A549 (cell line): ENCODE measurements at regions of chr6 and their contacts with region 1.

Region 1: GRCh38 chr6:43629505-43630300 is 639 bp upstream of the GTPBP2 start:
- DNase-seq: peak; percentile 95 to 97
- ATAC-seq: peak; percentile 82 to 92
- H3K4me3 ChIP-seq: peak overlapping the region; percentile 96
- H3K27ac ChIP-seq: peak overlapping the region; percentile 88 to 100
- H3K4me1 ChIP-seq: peaks cover 26% of the 10 kb centered on the region
- CTCF ChIP-seq: no peak
- EP300 ChIP-seq: no peak
- POLR2A ChIP-seq: no peak
- RAD21 ChIP-seq: no peak

Region 2: GRCh38 chr6:43600595-43600994 is 29.1 kb before region 1 on chr6:
- CTCF ChIA-PET with region 1: no interaction called
- POLR2A ChIA-PET with region 1: no interaction called
- DNase-seq: no peak
- ATAC-seq: no peak
- H3K4me3 ChIP-seq: no peak overlapping the region
- H3K27ac ChIP-seq: no peak overlapping the region
- H3K4me1 ChIP-seq: no peaks in the 10 kb centered on the region; the same call in 2 of the 3 replicates
- CTCF ChIP-seq: no peak
- EP300 ChIP-seq: no peak
- POLR2A ChIP-seq: no peak
- RAD21 ChIP-seq: no peak

Region 3: DNA sequence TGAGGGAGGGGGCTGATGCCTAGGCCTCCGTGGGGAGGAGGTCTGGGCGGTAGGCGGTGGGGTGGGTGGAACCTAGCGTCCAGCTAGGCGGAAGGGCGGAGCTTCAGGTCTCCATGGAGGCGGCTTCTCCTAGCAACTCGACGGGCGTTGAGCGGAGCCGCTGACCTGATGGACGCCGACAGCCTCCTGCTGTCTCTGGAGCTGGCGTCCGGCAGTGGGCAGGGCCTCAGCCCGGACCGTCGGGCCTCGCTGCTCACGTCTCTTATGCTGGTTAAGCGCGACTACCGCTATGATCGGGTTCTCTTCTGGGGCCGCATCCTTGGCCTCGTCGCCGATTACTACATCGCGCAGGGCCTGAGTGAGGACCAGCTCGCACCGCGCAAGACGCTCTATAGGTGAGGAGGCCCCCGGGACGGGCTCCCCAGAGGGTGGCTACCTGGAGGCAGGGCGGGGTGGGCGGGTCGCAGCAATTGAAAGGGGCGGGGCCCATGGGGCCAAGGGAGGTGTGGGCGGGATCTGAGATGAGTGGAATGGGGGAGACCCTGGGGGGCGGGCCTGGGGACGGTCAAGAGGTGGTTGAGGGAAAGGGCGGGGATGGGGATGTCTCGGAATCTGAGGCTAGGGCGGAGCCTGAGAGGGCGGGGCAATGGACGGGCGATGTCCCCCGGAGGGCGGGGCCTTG is 15.4 kb after region 1 on chr6 and contains the start of gene RSPH9:
- CTCF ChIA-PET with region 1: interaction called, 4 read pairs
- POLR2A ChIA-PET with region 1: interaction called, 10 read pairs
- DNase-seq: peak in 1 of 2 experiments; percentile 66
- ATAC-seq: peak; percentile 89 to 91
- H3K4me3 ChIP-seq: peak within 1 kb of the TSS; percentile 43
- H3K27ac ChIP-seq: peak within 1 kb of the TSS; percentile 11 to 78; a peak in 4 of 6 replicates
- H3K4me1 ChIP-seq: no peaks in the 10 kb centered on the region
- CTCF ChIP-seq: no peak
- EP300 ChIP-seq: no peak
- POLR2A ChIP-seq: no peak
- RAD21 ChIP-seq: no peak
- polyA plus RNA-seq, gene RSPH9: 0.18 and 0.37 TPM in 2 replicates

Region 4: DNA sequence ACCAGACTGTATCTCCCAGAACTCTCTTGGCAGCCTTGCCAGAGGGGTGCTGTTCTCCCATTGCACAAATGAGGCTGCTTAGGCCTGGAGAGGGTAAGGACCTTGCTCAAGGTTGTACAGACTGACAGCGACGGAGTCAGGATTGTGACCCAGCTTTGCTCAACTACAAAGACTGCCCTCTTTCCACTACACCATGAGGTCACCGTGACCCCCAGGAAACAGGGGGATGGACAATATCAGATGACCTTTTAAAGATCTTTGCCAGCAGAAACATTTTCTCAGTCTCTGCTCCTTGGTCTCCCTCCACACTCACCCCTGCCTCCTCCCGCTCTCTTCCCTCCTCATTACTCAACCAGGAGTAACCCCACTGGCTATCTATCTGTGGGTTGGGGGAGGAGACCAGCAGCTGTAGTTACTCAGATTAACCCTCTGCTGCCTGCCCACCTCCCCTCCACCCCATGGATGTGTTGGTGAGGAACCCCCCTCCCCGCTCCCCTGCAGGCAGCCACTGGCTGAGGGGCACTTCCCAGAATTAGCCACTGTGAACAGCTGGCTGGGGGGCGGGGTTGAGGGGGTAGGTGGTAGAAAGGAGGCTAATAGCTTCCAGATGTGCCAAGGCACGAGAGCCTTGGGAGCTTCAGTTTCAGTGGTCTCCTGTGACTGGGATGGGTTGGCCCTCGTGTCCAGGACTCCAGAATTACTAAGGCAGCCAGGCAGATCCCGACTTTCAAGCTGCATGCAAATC is 84.8 kb after region 1 on chr6:
- CTCF ChIA-PET with region 1: no interaction called
- POLR2A ChIA-PET with region 1: no interaction called
- DNase-seq: no peak
- ATAC-seq: no peak
- H3K4me3 ChIP-seq: no peak overlapping the region
- H3K27ac ChIP-seq: no peak overlapping the region
- H3K4me1 ChIP-seq: peaks cover 2% of the 10 kb centered on the region; the same call in 1 of the 3 replicates
- CTCF ChIP-seq: no peak
- EP300 ChIP-seq: no peak
- POLR2A ChIP-seq: no peak
- RAD21 ChIP-seq: no peak